ENCODE measurements at regions of chr1 and their contacts with region 1.

Region 1: GRCh38 chr1:29202584-29203340 is 21.1 kb upstream of the SRSF4 start:
- DNase-seq: peak; percentile 95
- ATAC-seq: peak; percentile 96 to 99

Region 2: DNA sequence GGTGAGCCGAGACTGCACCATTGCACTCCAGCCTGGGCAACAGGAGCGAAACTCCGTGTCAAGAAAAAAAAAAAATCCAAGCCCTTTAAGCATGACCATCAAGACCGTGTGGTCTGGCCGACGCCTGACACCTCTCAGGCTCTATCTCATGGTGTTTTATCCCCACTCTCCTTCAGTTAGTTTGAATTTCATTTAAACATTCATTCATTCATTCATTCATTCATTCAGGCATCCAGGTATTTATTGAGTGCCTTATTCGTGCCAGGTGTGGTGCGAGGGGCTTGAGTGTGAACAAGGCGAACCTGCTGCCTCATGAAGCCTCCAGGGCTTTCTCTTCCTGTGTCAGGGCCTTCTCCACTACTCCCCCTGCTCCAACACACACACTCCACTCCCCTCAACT is 413.4 kb before region 1 on chr1:
- intact Hi-C with region 1: loop called in 1 of 2 experiments (anchors 5 kb)
- DNase-seq: no peak
- ATAC-seq: no peak

Region 3: DNA sequence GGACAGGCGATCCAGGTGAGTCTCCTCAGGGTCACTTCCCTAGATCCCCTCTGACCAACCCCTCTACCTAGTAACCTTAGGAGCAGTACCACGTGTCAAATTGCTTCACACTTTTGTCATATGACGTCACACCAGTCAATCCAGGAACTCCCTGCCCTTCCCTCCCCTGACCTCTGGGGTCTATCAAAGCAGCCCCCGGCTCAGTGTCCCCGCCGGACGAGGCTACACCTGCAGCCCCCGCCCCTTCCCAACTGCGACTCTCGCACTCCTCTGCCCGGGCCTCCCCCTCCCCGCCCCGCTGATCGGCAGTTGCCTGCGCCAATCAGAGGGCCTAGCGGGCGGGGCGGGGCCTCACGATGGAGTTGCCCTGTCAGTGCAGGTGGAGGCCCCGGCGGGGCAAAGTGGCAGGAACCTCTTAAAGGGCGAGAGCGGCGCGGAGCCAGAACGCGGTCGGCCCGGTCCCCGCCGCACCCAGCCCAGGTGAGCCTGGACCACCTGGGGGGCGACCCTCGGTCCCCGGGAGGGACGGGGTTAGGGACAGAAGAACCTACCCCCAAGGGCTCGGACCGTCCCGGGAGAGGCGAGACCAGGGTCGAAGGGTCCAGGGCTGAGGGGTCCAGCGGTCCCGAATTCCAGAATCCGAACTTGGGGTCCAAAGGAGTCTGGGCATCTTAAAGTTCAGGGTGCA is 315.9 kb before region 1 on chr1:
- intact Hi-C with region 1: loop called (anchors 2 to 5 kb)
- DNase-seq: peak; percentile 87
- ATAC-seq: peak; percentile 83 to 87

Region 4: GRCh38 chr1:29033829-29034466 is 168.8 kb before region 1 on chr1:
- intact Hi-C with region 1: loop called (anchors 10 kb)
- DNase-seq: no peak
- ATAC-seq: peak; percentile 32 to 44